ENCODE measurements at regions of chr9 and their contacts with region 1.

Region 1: DNA sequence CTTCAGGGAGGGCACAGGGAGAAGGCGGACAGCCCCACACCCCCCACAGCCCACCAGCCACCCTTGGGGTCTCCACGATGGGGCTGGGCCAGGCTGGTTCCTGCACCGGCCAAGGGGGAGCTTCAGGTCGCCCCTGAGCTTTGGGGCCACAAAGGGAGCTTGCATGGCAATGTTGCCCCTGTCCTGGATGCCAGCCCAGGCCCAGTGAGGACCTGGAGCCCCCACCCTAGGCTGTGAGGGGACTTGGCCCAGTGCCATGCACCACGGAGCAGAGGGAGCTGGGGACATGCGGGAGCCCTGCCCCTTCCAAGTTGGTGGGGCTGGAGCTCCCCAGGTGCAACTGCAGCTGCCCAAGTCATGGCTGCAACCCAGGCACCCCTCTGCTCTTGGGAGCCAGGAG is 18.4 kb downstream of the TMEM38B start:
- DNase-seq: no peak
- H3K4me3 ChIP-seq: no peak overlapping the region
- H3K27ac ChIP-seq: no peak overlapping the region
- H3K4me1 ChIP-seq: no peaks in the 10 kb centered on the region
- H3K27me3 ChIP-seq: no peaks in the 10 kb centered on the region
- CTCF ChIP-seq: no peak
- POLR2A ChIP-seq: no peak

Region 2: GRCh38 chr9:105572455-105572854 is 140.3 kb before region 1 on chr9:
- intact Hi-C with region 1: no loop called
- DNase-seq: no peak
- H3K4me3 ChIP-seq: no peak overlapping the region
- H3K27ac ChIP-seq: no peak overlapping the region
- H3K4me1 ChIP-seq: no peaks in the 10 kb centered on the region
- H3K27me3 ChIP-seq: no peaks in the 10 kb centered on the region
- CTCF ChIP-seq: no peak
- POLR2A ChIP-seq: no peak

Region 3: DNA sequence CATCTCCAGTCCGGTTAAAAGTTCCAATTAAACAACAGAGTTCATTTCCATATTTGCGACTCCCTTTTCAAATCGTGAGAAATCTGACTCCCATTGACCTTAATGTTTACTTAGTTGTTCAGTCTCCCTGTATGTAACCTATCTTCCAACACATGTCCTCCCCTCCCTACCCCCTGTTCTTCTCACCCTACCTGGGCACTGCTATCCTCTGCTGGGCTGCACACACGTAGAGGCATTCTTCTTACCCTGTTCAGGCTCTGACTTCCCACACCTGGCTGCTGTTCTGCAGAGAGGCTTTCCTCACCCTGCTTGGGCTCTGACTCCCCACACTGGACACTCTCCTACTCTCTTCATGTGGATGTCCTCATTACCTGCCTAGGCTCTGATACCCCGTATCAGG is 102.4 kb before region 1 on chr9:
- intact Hi-C with region 1: loop called (anchors 10 kb)
- DNase-seq: no peak
- H3K4me3 ChIP-seq: no peak overlapping the region
- H3K27ac ChIP-seq: no peak overlapping the region
- H3K4me1 ChIP-seq: no peaks in the 10 kb centered on the region
- H3K27me3 ChIP-seq: no peaks in the 10 kb centered on the region
- CTCF ChIP-seq: no peak
- POLR2A ChIP-seq: no peak

Region 4: GRCh38 chr9:105656131-105656921 is 56.4 kb before region 1 on chr9:
- intact Hi-C with region 1: loop called (anchors 10 kb)
- DNase-seq: peak; percentile 9
- H3K4me3 ChIP-seq: peak overlapping the region; percentile 36 to 42
- H3K27ac ChIP-seq: no peak overlapping the region
- H3K4me1 ChIP-seq: no peaks in the 10 kb centered on the region
- H3K27me3 ChIP-seq: no peaks in the 10 kb centered on the region
- CTCF ChIP-seq: peak in 1 of 4 experiments; percentile 18
- POLR2A ChIP-seq: no peak

Region 5: DNA sequence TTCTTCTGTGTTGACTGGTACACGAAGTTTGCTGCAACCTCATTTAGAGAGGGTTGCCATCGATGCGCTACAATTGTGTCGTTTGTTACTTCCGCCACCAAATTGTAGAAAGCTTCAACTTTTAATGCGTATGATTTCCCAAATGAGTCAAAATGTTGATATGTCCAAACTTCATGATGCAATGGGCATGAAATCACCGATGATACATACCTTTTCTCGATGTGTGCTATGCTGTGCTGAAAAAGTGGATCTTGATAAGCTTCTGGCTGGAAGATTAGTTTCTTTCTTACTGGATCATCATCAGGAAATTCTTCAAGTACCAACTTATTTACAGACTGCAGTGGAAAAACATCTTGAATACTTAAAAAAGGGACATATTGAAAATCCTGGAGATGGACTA is 47.3 kb after region 1 on chr9:
- intact Hi-C with region 1: no loop called
- DNase-seq: no peak
- H3K4me3 ChIP-seq: no peak overlapping the region
- H3K27ac ChIP-seq: no peak overlapping the region
- H3K4me1 ChIP-seq: no peaks in the 10 kb centered on the region
- H3K27me3 ChIP-seq: no peaks in the 10 kb centered on the region
- CTCF ChIP-seq: no peak
- POLR2A ChIP-seq: no peak

Region 6: GRCh38 chr9:105973951-105974351 is 261.2 kb after region 1 on chr9:
- intact Hi-C with region 1: no loop called
- DNase-seq: no peak
- H3K4me3 ChIP-seq: no peak overlapping the region
- H3K27ac ChIP-seq: no peak overlapping the region
- H3K4me1 ChIP-seq: no peaks in the 10 kb centered on the region
- H3K27me3 ChIP-seq: no peaks in the 10 kb centered on the region
- CTCF ChIP-seq: no peak
- POLR2A ChIP-seq: no peak